IMR-90 (cell line): ENCODE measurements at regions of chr10 and their contacts with region 1.

Region 1: DNA sequence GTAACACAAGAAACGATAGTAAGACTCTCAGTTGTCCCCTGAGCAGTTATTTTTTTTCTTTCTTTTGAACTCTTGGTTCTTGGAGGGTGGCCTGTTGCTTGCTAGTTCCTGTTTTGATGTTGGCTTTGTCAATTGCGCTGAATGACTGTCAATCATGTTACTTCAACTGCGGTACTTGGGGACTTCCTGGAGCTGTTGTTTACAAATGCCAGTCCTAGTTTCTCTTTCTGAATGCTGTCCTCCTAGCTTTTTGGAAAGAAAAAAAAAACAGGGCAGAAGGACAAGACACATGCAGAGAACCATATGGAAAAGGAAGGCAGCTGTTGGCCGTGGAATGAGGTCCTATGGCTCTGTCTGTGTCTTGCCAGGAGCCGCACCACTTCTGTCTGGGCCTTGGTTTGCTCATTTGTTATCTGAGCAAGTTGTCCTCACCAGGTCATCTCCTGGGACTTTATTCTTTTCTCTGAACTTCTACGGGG is 7.0 kb upstream of the PDCD4 start:
- DNase-seq: no peak
- ATAC-seq: no peak
- H3K4me3 ChIP-seq: no peak overlapping the region
- H3K27ac ChIP-seq: no peak overlapping the region
- H3K4me1 ChIP-seq: peaks cover 15% of the 10 kb centered on the region
- H3K27me3 ChIP-seq: no peaks in the 10 kb centered on the region
- CTCF ChIP-seq: no peak
- POLR2A ChIP-seq: no peak
- RAD21 ChIP-seq: no peak

Region 2: GRCh38 chr10:110827410-110827809 is 37.3 kb before region 1 on chr10:
- CTCF ChIA-PET with region 1: no interaction called
- POLR2A ChIA-PET with region 1: no interaction called
- dilution Hi-C with region 1: no loop called
- in situ Hi-C with region 1: no loop called
- intact Hi-C with region 1: loop called (anchors 5 kb)
- DNase-seq: peak; percentile 82
- ATAC-seq: peak; percentile 83
- H3K4me3 ChIP-seq: no peak overlapping the region
- H3K27ac ChIP-seq: no peak overlapping the region
- H3K4me1 ChIP-seq: peaks cover 7% of the 10 kb centered on the region; the same call in 1 of the 2 replicates
- H3K27me3 ChIP-seq: peaks cover 14% of the 10 kb centered on the region
- CTCF ChIP-seq: no peak
- POLR2A ChIP-seq: no peak
- RAD21 ChIP-seq: no peak